CD4-positive, alpha-beta memory T cell (primary cell): ENCODE measurements at regions of chr4 and their contacts with region 1.

Region 1: GRCh38 chr4:145061318-145061920 is 36.6 kb downstream of the ANAPC10 start:
- DNase-seq: peak in 4 of 5 donors; percentile 33 to 43 (median 41)
- H3K4me3 ChIP-seq: no peak overlapping the region
- H3K4me3 Mint-ChIP-seq: no peak overlapping the region
- H3K27ac ChIP-seq: no peak overlapping the region
- H3K27ac Mint-ChIP-seq: peak overlapping the region in 1 of 7 donors; percentile 74
- H3K4me1 ChIP-seq: peaks cover 5% of the 10 kb centered on the region
- H3K4me1 Mint-ChIP-seq: peaks cover 15 to 18% (median 17%) of the 10 kb centered on the region in 4 donors
- H3K27me3 ChIP-seq: no peaks in the 10 kb centered on the region
- H3K27me3 Mint-ChIP-seq: no peaks in the 10 kb centered on the region

Region 2: GRCh38 chr4:143399113-143399949 is 1662.1 kb before region 1 on chr4:
- CTCF ChIA-PET with region 1: no interaction called
- POLR2A ChIA-PET with region 1: no interaction called
- intact Hi-C with region 1: loop called (anchors 1 kb)
- DNase-seq: peak in 4 of 5 donors; percentile 22 to 32 (median 31)
- H3K4me3 ChIP-seq: no peak overlapping the region
- H3K4me3 Mint-ChIP-seq: no peak overlapping the region
- H3K27ac ChIP-seq: no peak overlapping the region
- H3K27ac Mint-ChIP-seq: no peak overlapping the region
- H3K4me1 ChIP-seq: no peaks in the 10 kb centered on the region
- H3K4me1 Mint-ChIP-seq: peaks cover 0 to 10% (median 6%) of the 10 kb centered on the region in 4 donors
- H3K27me3 ChIP-seq: no peaks in the 10 kb centered on the region
- H3K27me3 Mint-ChIP-seq: peaks cover 6 to 8% of the 10 kb centered on the region in 2 donors

Region 3: DNA sequence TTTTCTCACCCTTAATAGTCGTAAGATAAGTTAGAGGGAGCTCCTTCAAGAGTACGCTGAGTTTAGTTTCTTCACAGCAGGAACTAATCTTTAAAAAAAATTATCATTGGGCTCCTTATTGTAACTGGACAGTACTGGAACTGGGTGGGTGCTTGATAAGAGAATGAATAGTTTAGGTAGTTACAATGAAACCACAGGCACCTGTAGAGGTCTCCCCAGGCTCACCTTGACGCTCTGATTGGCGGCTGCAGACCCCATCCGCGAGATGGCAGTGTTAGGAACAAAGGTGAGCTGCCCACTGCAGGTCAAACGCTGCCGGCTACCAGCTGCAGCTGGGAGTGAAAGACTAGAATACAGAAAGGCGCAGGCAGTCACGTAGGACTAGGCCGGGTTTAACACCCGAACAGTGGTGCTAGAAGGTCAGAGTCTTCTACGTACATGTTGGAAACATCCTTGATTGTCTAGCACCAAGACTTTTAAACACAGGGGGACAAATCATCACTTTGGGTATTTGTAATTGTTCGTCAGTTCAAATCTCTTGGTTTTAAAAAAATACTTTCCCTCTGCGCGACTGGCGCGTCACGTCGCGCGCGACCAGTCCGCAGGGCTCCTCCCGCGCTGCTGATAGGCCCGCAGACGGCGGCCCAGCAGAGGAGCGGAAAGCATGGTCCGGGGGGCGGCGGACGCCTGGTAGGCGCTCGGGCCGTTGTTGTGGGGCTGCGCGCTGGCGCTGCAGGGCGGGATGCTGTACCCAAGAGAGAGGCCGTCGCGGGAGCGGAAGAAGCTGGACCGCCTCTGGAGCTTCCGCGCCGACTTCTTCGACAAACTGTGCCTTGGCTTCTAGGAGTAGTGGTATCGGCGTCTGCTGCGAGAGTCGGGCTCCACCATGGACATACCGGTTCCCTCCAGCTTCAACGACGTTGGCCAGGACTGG is 1502.3 kb before region 1 on chr4:
- CTCF ChIA-PET with region 1: interaction called, 6 read pairs
- POLR2A ChIA-PET with region 1: no interaction called
- intact Hi-C with region 1: loop called (anchors 1 kb)
- DNase-seq: peak; percentile 68 to 80 (median 77)
- H3K4me3 ChIP-seq: peak overlapping the region; percentile 64 to 78
- H3K4me3 Mint-ChIP-seq: peak overlapping the region; percentile 91 to 98 (median 95)
- H3K27ac ChIP-seq: peak overlapping the region; percentile 46
- H3K27ac Mint-ChIP-seq: peak overlapping the region; percentile 92 to 98 (median 97)
- H3K4me1 ChIP-seq: peaks cover 19% of the 10 kb centered on the region
- H3K4me1 Mint-ChIP-seq: peaks cover 10 to 29% (median 20%) of the 10 kb centered on the region in 4 donors
- H3K27me3 ChIP-seq: no peaks in the 10 kb centered on the region
- H3K27me3 Mint-ChIP-seq: no peaks in the 10 kb centered on the region

Region 4: DNA sequence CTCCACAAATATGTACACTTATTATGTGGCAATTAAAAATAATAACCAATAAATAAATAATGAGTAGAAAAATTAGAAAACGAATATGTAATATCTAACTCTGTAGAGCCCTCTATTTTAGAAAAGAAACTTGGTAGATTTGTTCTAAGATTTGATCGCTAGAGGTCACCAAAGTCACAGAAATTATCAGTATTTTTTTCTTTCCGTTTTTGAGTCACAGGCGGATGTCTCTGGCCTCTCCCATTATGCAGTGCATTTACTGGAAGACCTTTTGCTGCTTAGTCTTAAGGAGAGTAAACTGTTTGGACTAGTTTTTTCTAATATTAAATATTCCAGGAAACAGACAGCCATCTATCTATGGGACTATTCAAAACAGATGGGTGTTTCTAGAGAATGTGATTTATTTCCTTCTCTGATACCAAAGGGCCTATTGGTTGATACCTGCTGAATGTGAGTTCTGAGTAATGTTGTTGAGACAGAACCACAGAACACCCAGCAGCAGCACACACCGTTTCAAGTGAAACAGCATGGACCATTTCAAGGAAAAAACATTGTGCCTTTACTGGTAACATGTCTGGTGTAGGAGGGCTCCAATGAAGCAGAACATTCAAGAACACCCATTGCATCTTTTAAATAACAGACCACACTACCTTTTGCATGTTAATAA is 886.9 kb before region 1 on chr4:
- CTCF ChIA-PET with region 1: interaction called, 5 read pairs
- POLR2A ChIA-PET with region 1: no interaction called
- intact Hi-C with region 1: loop called (anchors 1 kb)
- DNase-seq: peak; percentile 29 to 48 (median 41)
- H3K4me3 ChIP-seq: no peak overlapping the region
- H3K4me3 Mint-ChIP-seq: no peak overlapping the region
- H3K27ac ChIP-seq: no peak overlapping the region
- H3K27ac Mint-ChIP-seq: no peak overlapping the region
- H3K4me1 ChIP-seq: no peaks in the 10 kb centered on the region
- H3K4me1 Mint-ChIP-seq: peaks cover 0 to 6% (median 3%) of the 10 kb centered on the region in 4 donors
- H3K27me3 ChIP-seq: no peaks in the 10 kb centered on the region
- H3K27me3 Mint-ChIP-seq: peaks cover 7 to 9% of the 10 kb centered on the region in 2 donors